ENCODE measurements at regions of chr4 and their contacts with region 1.

Region 1: DNA sequence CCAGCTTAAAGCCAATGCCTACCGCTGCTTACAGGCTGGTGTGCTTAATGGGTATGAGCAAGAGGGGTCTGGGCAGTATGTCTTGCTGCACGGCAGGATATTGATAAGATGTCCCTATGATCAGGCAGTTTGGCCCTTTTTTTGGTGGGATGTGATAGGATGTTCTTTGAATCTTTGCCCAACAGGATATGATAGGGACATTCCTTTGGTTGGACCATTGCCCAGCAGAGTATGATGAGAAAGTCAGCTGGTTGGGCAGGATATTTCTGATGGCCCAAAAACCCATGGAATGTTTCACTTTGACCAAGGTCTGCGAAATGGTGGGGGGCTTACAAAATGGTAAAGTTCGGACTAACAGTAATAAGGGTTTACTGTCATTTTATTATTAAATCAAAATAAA is 1060.6 kb downstream of the STIM2 start:
- DNase-seq: no peak
- ATAC-seq: no peak
- H3K4me3 ChIP-seq: no peak overlapping the region
- H3K4me3 Mint-ChIP-seq: no peak overlapping the region
- H3K27ac ChIP-seq: no peak overlapping the region
- H3K27ac Mint-ChIP-seq: no peak overlapping the region
- H3K4me1 ChIP-seq: no peaks in the 10 kb centered on the region
- H3K4me1 Mint-ChIP-seq: no peaks in the 10 kb centered on the region
- H3K27me3 ChIP-seq: no peaks in the 10 kb centered on the region
- H3K27me3 Mint-ChIP-seq: no peaks in the 10 kb centered on the region

Region 2: GRCh38 chr4:28391877-28392276 is 470.6 kb after region 1 on chr4:
- CTCF ChIA-PET with region 1: no interaction called
- POLR2A ChIA-PET with region 1: no interaction called
- intact Hi-C with region 1: loop called in 1 of 2 experiments (anchors 5 kb)
- DNase-seq: no peak
- ATAC-seq: no peak
- H3K4me3 ChIP-seq: no peak overlapping the region
- H3K4me3 Mint-ChIP-seq: no peak overlapping the region
- H3K27ac ChIP-seq: no peak overlapping the region
- H3K27ac Mint-ChIP-seq: no peak overlapping the region
- H3K4me1 ChIP-seq: no peaks in the 10 kb centered on the region
- H3K4me1 Mint-ChIP-seq: no peaks in the 10 kb centered on the region
- H3K27me3 ChIP-seq: no peaks in the 10 kb centered on the region
- H3K27me3 Mint-ChIP-seq: no peaks in the 10 kb centered on the region